WTC11 (cell line): ENCODE measurements at regions of chr7 and their contacts with region 1.

Region 1: DNA sequence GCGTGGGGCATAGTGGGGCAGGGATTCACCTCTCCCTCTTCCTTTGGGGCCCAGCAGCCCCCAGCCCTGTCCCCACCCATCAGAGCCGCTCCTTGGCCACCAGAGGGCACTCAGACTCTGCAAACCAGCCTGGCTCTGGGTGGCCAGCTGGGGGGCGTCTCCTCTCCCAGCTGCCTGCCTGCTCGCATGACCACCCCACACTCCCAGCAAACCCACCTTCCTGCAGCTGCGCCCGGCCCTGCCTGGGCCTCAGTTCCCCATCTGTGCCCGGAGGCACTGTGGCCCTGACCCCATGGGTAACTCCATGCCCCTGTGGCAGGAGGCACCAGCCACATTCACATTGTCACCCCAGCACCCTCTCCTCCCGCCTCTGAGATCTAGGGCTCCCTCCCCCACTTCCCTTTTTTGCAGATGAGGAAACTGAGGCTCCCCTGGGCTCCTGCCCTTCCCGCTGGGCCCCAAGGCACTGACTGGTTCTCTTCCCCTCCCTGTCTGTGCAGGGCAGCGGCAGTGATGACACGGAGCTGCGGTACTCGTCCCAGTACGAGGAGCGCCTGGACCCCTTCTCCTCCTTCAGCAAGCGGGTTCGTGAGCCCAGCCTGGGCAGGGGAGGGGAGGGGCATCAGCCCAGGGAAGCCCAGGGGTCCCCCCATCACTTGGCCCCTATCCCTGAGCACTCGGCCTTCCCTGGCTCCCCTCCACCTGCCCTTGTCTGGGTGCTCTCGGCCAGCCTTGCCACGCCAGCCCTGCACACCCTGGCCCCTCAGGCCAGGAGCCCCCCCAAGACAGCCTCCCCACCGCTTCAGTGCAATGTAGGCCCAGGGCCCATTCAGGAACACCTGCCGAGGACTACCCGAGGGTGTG is 6.9 kb upstream of the SH2B2 start:
- DNase-seq: peak; percentile 81
- ATAC-seq: peak; percentile 94
- H3K4me3 Mint-ChIP-seq: peak overlapping the region; percentile 38
- H3K27ac Mint-ChIP-seq: no peak overlapping the region
- H3K4me1 Mint-ChIP-seq: peaks cover 7% of the 10 kb centered on the region
- H3K27me3 Mint-ChIP-seq: no peaks in the 10 kb centered on the region
- CTCF ChIP-seq: peak; percentile 62

Region 2: GRCh38 chr7:102248456-102249395 is 31.0 kb before region 1 on chr7:
- CTCF ChIA-PET with region 1: no interaction called
- POLR2A ChIA-PET with region 1: no interaction called
- DNase-seq: peak; percentile 77
- ATAC-seq: peak; percentile 75
- H3K4me3 Mint-ChIP-seq: no peak overlapping the region
- H3K27ac Mint-ChIP-seq: no peak overlapping the region
- H3K4me1 Mint-ChIP-seq: peaks cover 9% of the 10 kb centered on the region
- H3K27me3 Mint-ChIP-seq: no peaks in the 10 kb centered on the region
- CTCF ChIP-seq: 0 out of 2 replicates have a peak, but pooled peaks have one; percentile 13

Region 3: GRCh38 chr7:102292813-102293798 is 13.3 kb after region 1 on chr7:
- CTCF ChIA-PET with region 1: interaction called, 13 read pairs
- POLR2A ChIA-PET with region 1: no interaction called
- DNase-seq: peak; percentile 38
- ATAC-seq: peak; percentile 49
- H3K4me3 Mint-ChIP-seq: peak overlapping the region; percentile 66
- H3K27ac Mint-ChIP-seq: no peak overlapping the region
- H3K4me1 Mint-ChIP-seq: peaks cover 42% of the 10 kb centered on the region
- H3K27me3 Mint-ChIP-seq: peaks cover 9% of the 10 kb centered on the region
- CTCF ChIP-seq: no peak

Region 4: GRCh38 chr7:102306875-102307677 is 27.3 kb after region 1 on chr7:
- CTCF ChIA-PET with region 1: interaction called, 12 read pairs
- POLR2A ChIA-PET with region 1: no interaction called
- DNase-seq: peak; percentile 62
- ATAC-seq: peak; percentile 81
- H3K4me3 Mint-ChIP-seq: no peak overlapping the region
- H3K27ac Mint-ChIP-seq: peak overlapping the region; percentile 60; the same call in 1 of the 2 replicates
- H3K4me1 Mint-ChIP-seq: peaks cover 16% of the 10 kb centered on the region
- H3K27me3 Mint-ChIP-seq: no peaks in the 10 kb centered on the region; the same call in none of the 2 replicates
- CTCF ChIP-seq: no peak

Region 5: DNA sequence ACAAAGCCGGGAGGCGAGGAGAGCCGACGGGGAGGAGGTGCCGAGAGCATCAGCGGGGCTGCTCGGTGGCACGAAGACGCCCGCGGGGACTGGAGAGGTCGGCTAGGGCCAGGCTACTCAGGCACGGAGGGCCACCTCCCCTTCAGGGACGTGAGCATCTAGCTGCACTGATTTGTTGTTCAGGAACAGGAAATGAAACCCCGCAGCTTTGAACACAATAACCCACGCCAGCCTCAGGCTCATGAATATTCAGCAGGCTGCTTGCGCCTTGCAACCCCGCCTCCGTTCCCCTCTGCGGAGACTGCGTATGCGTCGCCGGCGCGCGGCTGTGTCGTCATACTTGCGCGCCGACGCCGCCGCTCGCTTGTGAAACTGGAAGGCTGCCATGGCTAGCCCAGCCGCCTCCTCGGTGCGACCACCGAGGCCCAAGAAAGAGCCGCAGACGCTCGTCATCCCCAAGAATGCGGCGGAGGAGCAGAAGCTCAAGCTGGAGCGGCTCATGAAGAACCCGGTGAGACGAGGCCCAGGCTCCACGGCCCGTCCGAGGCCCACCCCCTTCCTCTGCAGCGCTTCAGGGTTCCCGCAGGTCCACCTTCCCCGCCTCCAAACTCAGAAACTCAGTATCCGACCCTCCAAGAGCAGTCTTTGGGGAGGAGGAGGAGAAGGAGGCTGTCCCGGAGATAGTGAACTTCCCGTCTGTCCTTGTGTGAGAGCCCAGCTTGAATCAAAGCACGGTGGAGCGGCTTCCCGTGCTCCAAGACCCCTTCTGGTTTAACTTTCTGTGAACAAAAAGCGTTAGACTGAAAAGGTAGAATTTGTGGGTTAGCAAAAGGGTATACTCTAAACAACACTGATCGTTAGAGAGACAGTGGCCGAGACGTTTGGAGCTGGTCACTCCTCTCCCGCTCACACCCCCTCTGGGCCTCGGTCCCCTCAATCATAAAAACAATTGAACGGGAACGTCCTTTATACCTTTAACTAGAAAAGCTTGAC is 116.6 kb after region 1 on chr7 and contains the start of gene PRKRIP1:
- CTCF ChIA-PET with region 1: interaction called, 12 read pairs
- POLR2A ChIA-PET with region 1: no interaction called
- DNase-seq: peak; percentile 87
- ATAC-seq: peak; percentile 97
- H3K4me3 Mint-ChIP-seq: peak within 1 kb of the TSS; percentile 88
- H3K27ac Mint-ChIP-seq: peak within 1 kb of the TSS; percentile 99
- H3K4me1 Mint-ChIP-seq: peaks cover 5% of the 10 kb centered on the region
- H3K27me3 Mint-ChIP-seq: no peaks in the 10 kb centered on the region
- CTCF ChIP-seq: no peak
- total RNA-seq, gene PRKRIP1: 27.5 to 34.4 TPM (median 30.1 TPM) in 3 replicates

Region 6: GRCh38 chr7:102472116-102473041 is 192.6 kb after region 1 on chr7:
- CTCF ChIA-PET with region 1: no interaction called
- POLR2A ChIA-PET with region 1: no interaction called
- DNase-seq: no peak
- ATAC-seq: no peak
- H3K4me3 Mint-ChIP-seq: no peak overlapping the region
- H3K27ac Mint-ChIP-seq: peak overlapping the region; percentile 60; the same call in 1 of the 2 replicates
- H3K4me1 Mint-ChIP-seq: no peaks in the 10 kb centered on the region
- H3K27me3 Mint-ChIP-seq: no peaks in the 10 kb centered on the region
- CTCF ChIP-seq: no peak